PC-9 (cell line): ENCODE measurements at regions of chr12 and their contacts with region 1.

Region 1: GRCh38 chr12:11877869-11878780 is 192.6 kb upstream of the BCL2L14 start:
- DNase-seq: peak; percentile 85 to 93
- H3K4me3 ChIP-seq: peak overlapping the region; percentile 45; the same call in 1 of the 2 replicates
- H3K27ac ChIP-seq: peak overlapping the region; percentile 96
- H3K4me1 ChIP-seq: peaks cover 64% of the 10 kb centered on the region
- H3K27me3 ChIP-seq: no peaks in the 10 kb centered on the region
- CTCF ChIP-seq: no peak

Region 2: DNA sequence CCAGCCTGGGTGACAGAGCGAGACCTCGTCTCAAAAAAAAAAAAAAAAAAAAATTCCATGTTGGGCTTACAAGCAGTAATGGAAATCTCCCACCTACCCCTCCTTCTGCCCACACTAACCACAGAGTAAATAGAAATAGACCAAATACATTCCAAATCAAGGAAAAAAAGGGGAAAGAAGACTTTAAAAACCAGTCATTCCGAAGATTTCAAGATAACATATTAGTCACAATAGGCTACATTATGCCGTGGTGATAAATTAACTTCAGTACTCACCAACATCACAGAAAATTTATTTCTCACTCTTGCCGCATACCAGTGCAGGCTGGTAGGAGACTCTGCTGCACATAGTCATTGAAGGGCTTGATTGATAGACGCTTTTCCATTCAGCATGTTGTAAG is 244.2 kb before region 1 on chr12:
- CTCF ChIA-PET with region 1: no interaction called
- POLR2A ChIA-PET with region 1: no interaction called
- intact Hi-C with region 1: loop called (anchors 1 kb)
- DNase-seq: peak; percentile 38 to 89
- H3K4me3 ChIP-seq: no peak overlapping the region
- H3K27ac ChIP-seq: peak overlapping the region; percentile 47
- H3K4me1 ChIP-seq: peaks cover 17% of the 10 kb centered on the region
- H3K27me3 ChIP-seq: no peaks in the 10 kb centered on the region
- CTCF ChIP-seq: no peak

Region 3: DNA sequence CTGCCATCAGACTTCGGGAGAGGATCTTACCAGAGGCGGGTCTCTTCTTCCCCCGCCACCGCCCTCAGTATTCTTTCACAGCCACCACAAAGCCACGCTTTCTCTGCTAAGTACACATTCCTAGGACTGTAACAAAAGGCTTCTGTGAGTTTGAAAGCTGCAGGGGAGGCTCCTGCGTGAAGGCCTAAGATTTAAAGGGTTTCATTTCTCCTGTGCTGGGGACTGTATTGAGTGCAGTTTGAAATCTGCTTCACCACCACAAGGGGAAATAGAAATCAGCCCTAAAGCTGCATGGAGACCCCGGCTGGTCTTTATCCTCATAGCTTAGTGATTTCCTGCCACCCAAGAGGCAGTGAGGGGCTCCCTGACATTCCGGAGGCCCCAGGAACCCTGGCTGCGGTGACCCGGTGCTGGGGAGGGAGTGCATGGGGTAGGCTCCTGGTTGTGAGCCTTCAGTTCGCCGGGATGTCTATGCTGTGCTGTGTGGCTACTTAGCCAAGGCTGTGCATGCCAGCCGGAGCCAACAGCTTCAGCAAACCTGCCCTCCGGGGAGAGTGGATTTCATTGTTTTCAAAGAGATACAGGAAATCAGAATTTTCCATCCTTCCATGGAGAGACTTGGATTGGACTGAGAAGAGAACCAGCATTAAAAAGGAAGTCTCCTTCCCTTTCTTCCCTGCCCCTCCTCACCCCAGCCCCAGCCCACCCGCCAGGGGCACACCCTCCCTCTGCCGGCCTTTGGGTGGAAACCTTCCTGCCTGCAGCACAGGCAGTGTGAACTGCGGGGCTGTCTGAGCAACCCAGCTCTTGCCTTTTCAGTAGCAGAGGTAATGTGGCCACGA is 65.3 kb before region 1 on chr12:
- CTCF ChIA-PET with region 1: no interaction called
- POLR2A ChIA-PET with region 1: no interaction called
- intact Hi-C with region 1: no loop called
- DNase-seq: no peak
- H3K4me3 ChIP-seq: no peak overlapping the region
- H3K27ac ChIP-seq: no peak overlapping the region
- H3K4me1 ChIP-seq: no peaks in the 10 kb centered on the region
- H3K27me3 ChIP-seq: no peaks in the 10 kb centered on the region
- CTCF ChIP-seq: no peak

Region 4: DNA sequence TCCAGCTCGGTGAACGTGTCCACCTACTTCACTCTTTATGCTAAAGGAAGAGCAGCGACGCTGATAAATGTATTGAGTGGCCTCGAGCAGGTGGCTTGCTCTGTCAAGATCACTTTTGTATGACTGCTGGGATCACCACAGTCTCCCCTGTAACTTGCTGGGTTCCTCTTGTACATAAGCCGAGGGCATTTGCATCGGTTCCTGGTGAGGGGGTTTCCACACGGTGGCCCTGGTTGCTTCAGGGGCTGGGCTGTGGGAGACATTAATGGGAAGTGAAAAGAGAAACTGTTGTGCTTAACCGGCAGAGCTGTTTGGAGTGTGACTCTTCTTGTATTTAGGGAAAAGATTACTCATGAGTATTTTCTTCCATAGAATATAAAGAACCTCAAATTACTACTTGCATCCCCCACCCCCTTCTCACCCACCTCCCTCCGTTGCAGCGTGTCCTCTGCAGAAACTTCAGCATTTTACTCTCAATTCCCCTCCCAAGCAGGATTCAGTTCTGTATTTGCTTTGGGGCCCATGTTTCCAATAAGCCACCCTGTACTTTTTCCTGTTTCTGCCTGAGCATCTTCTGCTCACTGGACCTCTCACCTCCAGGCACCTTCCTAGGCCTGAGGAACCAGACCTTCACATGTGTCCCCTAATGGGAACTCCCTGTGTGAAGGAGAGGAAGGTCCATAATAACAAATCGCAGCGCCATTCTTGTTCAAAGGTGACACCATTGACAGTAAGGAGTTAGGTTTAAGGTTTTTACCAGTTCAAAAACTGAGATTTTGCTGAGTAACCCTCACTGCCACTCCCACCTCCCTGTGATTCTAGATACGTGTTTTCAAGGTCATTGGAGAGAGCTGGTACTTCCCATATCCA is 41.6 kb before region 1 on chr12:
- CTCF ChIA-PET with region 1: no interaction called
- POLR2A ChIA-PET with region 1: interaction called, 13 read pairs
- intact Hi-C with region 1: no loop called
- DNase-seq: no peak
- H3K4me3 ChIP-seq: no peak overlapping the region
- H3K27ac ChIP-seq: no peak overlapping the region
- H3K4me1 ChIP-seq: peaks cover 28% of the 10 kb centered on the region
- H3K27me3 ChIP-seq: no peaks in the 10 kb centered on the region
- CTCF ChIP-seq: no peak

Region 5: GRCh38 chr12:12008931-12009611 is 130.9 kb after region 1 on chr12:
- CTCF ChIA-PET with region 1: no interaction called
- POLR2A ChIA-PET with region 1: no interaction called
- intact Hi-C with region 1: loop called (anchors 1 kb)
- DNase-seq: peak; percentile 80 to 98
- H3K4me3 ChIP-seq: no peak overlapping the region
- H3K27ac ChIP-seq: peak overlapping the region; percentile 94
- H3K4me1 ChIP-seq: peaks cover 45% of the 10 kb centered on the region
- H3K27me3 ChIP-seq: no peaks in the 10 kb centered on the region
- CTCF ChIP-seq: no peak; the same call in 1 of the 2 replicates